ENCODE measurements at regions of chr12 and their contacts with region 1.

Region 1: GRCh38 chr12:6688999-6689882 is at the start of gene ZNF384:
- DNase-seq: peak; percentile 97
- ATAC-seq: peak; percentile 83
- H3K4me3 ChIP-seq: peak within 1 kb of the TSS; percentile 80
- H3K27ac ChIP-seq: peak within 1 kb of the TSS; percentile 97
- H3K4me1 ChIP-seq: peaks cover 10% of the 10 kb centered on the region; the same call in 1 of the 2 replicates
- H3K27me3 ChIP-seq: no peaks in the 10 kb centered on the region
- CTCF ChIP-seq: 0 out of 6 replicates have a peak, but pooled peaks of 1 of the 3 experiments have one; percentile 0
- EP300 ChIP-seq: peak in 1 of 2 experiments; percentile 17; a peak in 1 of 4 replicates
- POLR2A ChIP-seq: peak; percentile 88
- RAD21 ChIP-seq: no peak
- polyA plus RNA-seq, gene ZNF384: 0.46 to 1.3 TPM

Region 2: GRCh38 chr12:6563448-6564050 is 125.7 kb before region 1 on chr12:
- CTCF ChIA-PET with region 1: interaction called, 14 read pairs
- POLR2A ChIA-PET with region 1: interaction called, 4 read pairs
- RAD21 ChIA-PET with region 1: interaction called, 4 read pairs
- SMC1A ChIA-PET with region 1: interaction called, 4 read pairs
- in situ Hi-C with region 1: no loop called
- intact Hi-C with region 1: loop called (anchors 5 kb)
- DNase-seq: no peak
- ATAC-seq: peak; percentile 54
- H3K4me3 ChIP-seq: no peak overlapping the region
- H3K27ac ChIP-seq: no peak overlapping the region
- H3K4me1 ChIP-seq: peaks cover 4% of the 10 kb centered on the region; the same call in 1 of the 2 replicates
- H3K27me3 ChIP-seq: no peaks in the 10 kb centered on the region
- CTCF ChIP-seq: peak; percentile 69 to 84 (median 73)
- EP300 ChIP-seq: no peak
- POLR2A ChIP-seq: no peak; the same call in 1 of the 2 replicates
- RAD21 ChIP-seq: peak; percentile 42

Region 3: GRCh38 chr12:6613776-6614512 is 75.3 kb before region 1 on chr12:
- CTCF ChIA-PET with region 1: interaction called, 18 read pairs
- POLR2A ChIA-PET with region 1: interaction called, 13 read pairs
- RAD21 ChIA-PET with region 1: interaction called, 11 read pairs
- SMC1A ChIA-PET with region 1: interaction called, 9 read pairs
- in situ Hi-C with region 1: loop called (anchors 5 kb)
- intact Hi-C with region 1: loop called (anchors 1 kb)
- DNase-seq: no peak
- ATAC-seq: peak; percentile 68
- H3K4me3 ChIP-seq: no peak overlapping the region
- H3K27ac ChIP-seq: no peak overlapping the region; the same call in 1 of the 2 replicates
- H3K4me1 ChIP-seq: peaks cover 28% of the 10 kb centered on the region
- H3K27me3 ChIP-seq: no peaks in the 10 kb centered on the region
- CTCF ChIP-seq: peak; percentile 12 to 20 (median 17); a peak in 3 of 6 replicates
- EP300 ChIP-seq: no peak
- POLR2A ChIP-seq: peak; percentile 44; the same call in 1 of the 2 replicates
- RAD21 ChIP-seq: no peak

Region 4: DNA sequence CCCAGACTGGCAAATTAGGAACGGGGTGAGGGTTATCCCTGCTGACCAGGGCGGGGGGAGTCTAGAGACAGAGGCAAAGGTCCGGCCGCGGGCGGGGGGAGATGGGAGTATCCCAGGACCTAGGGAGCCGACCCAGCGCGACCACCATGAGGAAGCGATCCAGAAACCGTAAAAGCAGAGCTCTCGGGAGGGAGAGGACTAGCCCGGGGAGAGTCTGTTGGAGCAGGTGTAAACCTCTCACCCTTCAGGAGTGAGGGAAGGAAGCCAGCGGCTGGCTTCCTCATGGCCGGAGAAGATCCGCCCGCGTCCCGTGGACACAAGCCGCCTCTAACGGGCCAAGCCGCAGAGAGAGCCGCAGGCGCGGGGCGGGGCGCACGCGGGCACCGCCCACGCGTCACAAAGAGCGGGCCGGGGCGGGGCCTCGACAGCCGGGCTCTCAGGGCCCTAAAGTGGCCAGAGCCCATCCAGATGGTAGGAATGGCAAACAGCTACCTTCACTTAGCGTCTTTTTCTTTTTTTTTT is 42.1 kb before region 1 on chr12 and contains the start of gene ACRBP:
- CTCF ChIA-PET with region 1: interaction called, 9 read pairs
- POLR2A ChIA-PET with region 1: no interaction called
- RAD21 ChIA-PET with region 1: interaction called, 10 read pairs
- SMC1A ChIA-PET with region 1: no interaction called
- in situ Hi-C with region 1: no loop called
- intact Hi-C with region 1: no loop called
- DNase-seq: no peak
- ATAC-seq: peak; percentile 93
- H3K4me3 ChIP-seq: peak within 1 kb of the TSS; percentile 49
- H3K27ac ChIP-seq: no peak within 1 kb of the TSS; the same call in 1 of the 2 replicates
- H3K4me1 ChIP-seq: peaks cover 14% of the 10 kb centered on the region
- H3K27me3 ChIP-seq: no peaks in the 10 kb centered on the region
- CTCF ChIP-seq: no peak
- EP300 ChIP-seq: no peak
- POLR2A ChIP-seq: peak; percentile 19; the same call in 1 of the 2 replicates
- RAD21 ChIP-seq: no peak
- polyA plus RNA-seq, gene ACRBP: 0.64 to 0.80 TPM

Region 5: DNA sequence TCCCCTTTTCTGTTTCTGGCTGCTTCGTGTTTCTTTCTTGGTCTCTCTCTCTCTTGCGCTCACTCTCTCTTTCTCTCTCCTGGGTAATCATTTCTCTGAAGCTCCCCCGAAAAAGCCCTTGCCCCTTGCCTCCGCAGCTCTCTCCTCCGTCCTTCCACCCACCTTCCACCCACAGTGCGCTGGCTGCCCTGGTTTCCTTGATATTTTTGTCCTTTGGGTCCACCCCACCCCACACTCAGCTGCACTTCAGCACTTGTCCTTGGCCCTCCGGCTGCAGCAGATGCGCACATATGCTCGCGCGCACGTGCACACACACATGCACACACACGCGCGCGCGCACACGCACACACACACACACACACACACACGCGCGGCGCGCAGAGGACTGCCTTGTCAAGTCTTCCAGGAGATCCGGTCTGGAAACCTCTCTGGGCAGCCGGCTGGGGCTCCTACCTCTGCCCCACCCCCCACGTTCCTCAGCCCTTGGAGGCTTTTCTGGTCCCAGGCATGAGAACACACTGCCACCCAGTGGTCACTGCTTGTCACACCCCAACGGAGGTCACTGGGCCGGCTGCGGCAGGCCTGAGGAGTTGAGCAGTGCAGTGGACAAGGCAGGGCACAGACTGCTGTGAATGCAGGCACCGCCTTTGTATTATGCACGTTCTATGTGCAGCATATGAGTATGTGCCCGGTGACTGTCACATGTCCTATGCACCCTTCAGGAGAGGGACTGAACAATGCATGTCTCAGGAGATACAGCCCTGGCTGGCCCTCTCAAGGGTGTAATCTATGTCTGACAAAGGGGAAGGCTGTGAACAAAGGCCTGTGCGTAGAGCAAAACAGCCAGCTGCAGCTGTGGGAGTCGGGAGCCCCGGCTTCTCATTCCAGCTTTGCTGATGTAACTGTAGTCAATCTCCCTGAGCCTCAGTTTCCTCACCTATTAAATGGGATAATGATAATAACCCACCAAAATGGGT is 89.6 kb after region 1 on chr12:
- CTCF ChIA-PET with region 1: interaction called, 7 read pairs
- POLR2A ChIA-PET with region 1: interaction called, 5 read pairs
- RAD21 ChIA-PET with region 1: interaction called, 3 read pairs
- SMC1A ChIA-PET with region 1: interaction called, 7 read pairs
- in situ Hi-C with region 1: no loop called
- intact Hi-C with region 1: loop called (anchors 2 kb)
- DNase-seq: peak; percentile 72
- ATAC-seq: peak; percentile 96
- H3K4me3 ChIP-seq: peak overlapping the region; percentile 56
- H3K27ac ChIP-seq: no peak overlapping the region
- H3K4me1 ChIP-seq: peaks cover 29% of the 10 kb centered on the region
- H3K27me3 ChIP-seq: no peaks in the 10 kb centered on the region
- CTCF ChIP-seq: peak; percentile 95 to 99 (median 96); a peak in 5 of 6 replicates
- EP300 ChIP-seq: no peak
- POLR2A ChIP-seq: 0 out of 2 replicates have a peak, but pooled peaks have one; percentile 20
- RAD21 ChIP-seq: peak; percentile 97